Mammary epithelial cell (primary cell): ENCODE measurements at regions of chr14 and their contacts with region 1.

Region 1: DNA sequence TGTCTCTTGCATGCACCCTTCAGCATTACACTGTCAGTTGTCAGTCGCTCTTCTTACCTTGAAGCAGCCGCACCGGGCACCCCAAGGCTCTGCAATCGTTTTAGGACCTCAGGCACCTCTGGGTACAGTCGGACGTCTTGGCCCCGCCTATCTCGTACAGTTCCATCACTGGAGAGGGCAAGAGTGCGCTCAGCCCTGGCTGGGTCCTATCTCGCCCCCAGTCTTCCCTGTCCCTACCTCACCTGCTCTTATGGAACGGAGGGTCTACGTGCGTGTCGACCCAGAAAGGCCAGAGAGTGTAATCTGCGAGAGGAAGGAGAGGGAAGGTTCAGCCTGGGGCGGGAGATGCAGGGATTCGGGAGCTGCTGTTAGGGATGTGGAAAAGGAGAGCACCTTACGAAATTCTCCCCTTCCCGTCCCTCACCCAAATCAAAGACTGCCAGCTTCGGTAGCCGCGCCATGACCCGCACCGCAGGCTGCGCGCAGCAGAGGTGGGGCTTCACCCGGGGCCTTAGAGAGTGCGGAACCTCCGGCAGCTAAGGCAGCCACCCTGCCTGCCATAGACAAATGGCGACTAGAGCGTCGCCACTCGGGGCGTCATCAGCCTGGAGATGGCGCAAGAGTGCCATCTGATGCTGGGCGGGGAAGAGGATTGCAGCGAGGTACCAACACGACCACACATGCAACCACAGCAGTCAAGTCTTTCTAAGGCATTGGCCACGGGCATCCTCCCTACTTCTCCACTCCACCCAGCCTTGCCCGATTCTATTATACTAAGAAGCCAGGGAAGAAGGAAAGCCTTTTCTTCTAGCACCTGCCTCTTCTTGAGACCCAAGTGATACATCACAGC is at the start of gene MDP1:
- DNase-seq: peak; percentile 83
- H3K4me3 ChIP-seq: peak within 1 kb of the TSS; percentile 34 to 86 (median 46)
- H3K27ac ChIP-seq: peak within 1 kb of the TSS; percentile 42
- H3K4me1 ChIP-seq: peaks cover 14% of the 10 kb centered on the region
- H3K27me3 ChIP-seq: no peaks in the 10 kb centered on the region
- CTCF ChIP-seq: peak; percentile 39 to 60
- total RNA-seq, gene MDP1: 6.5 to 12.0 TPM

Region 2: GRCh38 chr14:24093901-24094761 is 121.6 kb before region 1 on chr14 and contains the start of gene PCK2:
- CTCF ChIA-PET with region 1: no interaction called
- dilution Hi-C with region 1: no loop called
- in situ Hi-C with region 1: no loop called
- intact Hi-C with region 1: no loop called
- DNase-seq: peak; percentile 88
- H3K4me3 ChIP-seq: peak within 1 kb of the TSS; percentile 67 to 86 (median 77)
- H3K27ac ChIP-seq: peak within 1 kb of the TSS; percentile 54
- H3K4me1 ChIP-seq: peaks cover 12% of the 10 kb centered on the region
- H3K27me3 ChIP-seq: no peaks in the 10 kb centered on the region
- CTCF ChIP-seq: peak in 1 of 2 donors; percentile 6
- total RNA-seq, gene PCK2: 55.5 to 129 TPM

Region 3: GRCh38 chr14:24232121-24232644 is 16.5 kb after region 1 on chr14 and contains the start of gene NEDD8:
- CTCF ChIA-PET with region 1: no interaction called
- dilution Hi-C with region 1: no loop called
- in situ Hi-C with region 1: no loop called
- intact Hi-C with region 1: loop called (anchors 1 kb)
- DNase-seq: peak; percentile 99
- H3K4me3 ChIP-seq: peak within 1 kb of the TSS; percentile 52 to 67 (median 65)
- H3K27ac ChIP-seq: peak within 1 kb of the TSS; percentile 95
- H3K4me1 ChIP-seq: peaks cover 13% of the 10 kb centered on the region
- H3K27me3 ChIP-seq: no peaks in the 10 kb centered on the region
- CTCF ChIP-seq: no peak
- total RNA-seq, gene NEDD8: 66.2 to 274 TPM

Region 4: DNA sequence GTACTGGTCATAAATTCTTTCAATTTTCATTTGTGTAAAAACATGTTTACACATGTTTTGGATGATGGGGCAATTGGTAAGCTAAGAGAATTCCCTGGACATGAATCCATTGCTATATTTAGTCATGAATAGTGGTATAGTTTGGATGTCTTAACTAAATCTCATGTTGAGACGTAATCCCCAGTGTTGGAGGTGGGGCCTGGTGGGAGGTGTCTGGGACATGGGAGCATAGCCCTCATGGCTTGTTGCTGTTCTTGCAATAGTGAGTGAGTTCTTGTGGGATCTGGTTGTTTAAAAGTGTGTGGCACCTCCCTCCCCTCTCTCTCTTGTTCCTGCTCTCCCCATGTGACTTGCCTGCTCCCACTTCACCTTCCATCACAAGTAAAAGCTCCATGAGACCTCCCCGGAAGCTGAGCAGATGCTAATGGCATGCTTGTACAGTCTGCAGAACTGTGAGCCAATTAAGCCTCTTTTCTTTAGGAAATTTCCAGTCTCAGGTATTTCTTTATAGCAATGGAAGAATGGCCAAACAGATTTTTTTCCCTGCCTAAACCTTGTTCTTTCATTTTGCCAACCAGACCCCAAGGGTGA is 326.7 kb after region 1 on chr14:
- CTCF ChIA-PET with region 1: no interaction called
- dilution Hi-C with region 1: no loop called
- in situ Hi-C with region 1: no loop called
- intact Hi-C with region 1: no loop called
- DNase-seq: peak; percentile 93
- H3K4me3 ChIP-seq: no peak overlapping the region
- H3K27ac ChIP-seq: peak overlapping the region; percentile 92
- H3K4me1 ChIP-seq: peaks cover 13% of the 10 kb centered on the region
- H3K27me3 ChIP-seq: no peaks in the 10 kb centered on the region
- CTCF ChIP-seq: no peak